ENCODE measurements at regions of chr2 and their contacts with region 1.

Region 1: GRCh38 chr2:240232961-240233893 is 92.8 kb upstream of the OTOS start:
- DNase-seq: peak; percentile 88
- ATAC-seq: peak; percentile 84
- H3K4me3 ChIP-seq: peak overlapping the region; percentile 35 to 49
- H3K27ac ChIP-seq: peak overlapping the region; percentile 65
- H3K4me1 ChIP-seq: peaks cover 4 to 40% of the 10 kb centered on the region in 2 experiments
- H3K27me3 ChIP-seq: no peaks in the 10 kb centered on the region
- CTCF ChIP-seq: peak; percentile 84 to 96 (median 85)
- POLR2A ChIP-seq: no peak
- RAD21 ChIP-seq: peak; percentile 100

Region 2: DNA sequence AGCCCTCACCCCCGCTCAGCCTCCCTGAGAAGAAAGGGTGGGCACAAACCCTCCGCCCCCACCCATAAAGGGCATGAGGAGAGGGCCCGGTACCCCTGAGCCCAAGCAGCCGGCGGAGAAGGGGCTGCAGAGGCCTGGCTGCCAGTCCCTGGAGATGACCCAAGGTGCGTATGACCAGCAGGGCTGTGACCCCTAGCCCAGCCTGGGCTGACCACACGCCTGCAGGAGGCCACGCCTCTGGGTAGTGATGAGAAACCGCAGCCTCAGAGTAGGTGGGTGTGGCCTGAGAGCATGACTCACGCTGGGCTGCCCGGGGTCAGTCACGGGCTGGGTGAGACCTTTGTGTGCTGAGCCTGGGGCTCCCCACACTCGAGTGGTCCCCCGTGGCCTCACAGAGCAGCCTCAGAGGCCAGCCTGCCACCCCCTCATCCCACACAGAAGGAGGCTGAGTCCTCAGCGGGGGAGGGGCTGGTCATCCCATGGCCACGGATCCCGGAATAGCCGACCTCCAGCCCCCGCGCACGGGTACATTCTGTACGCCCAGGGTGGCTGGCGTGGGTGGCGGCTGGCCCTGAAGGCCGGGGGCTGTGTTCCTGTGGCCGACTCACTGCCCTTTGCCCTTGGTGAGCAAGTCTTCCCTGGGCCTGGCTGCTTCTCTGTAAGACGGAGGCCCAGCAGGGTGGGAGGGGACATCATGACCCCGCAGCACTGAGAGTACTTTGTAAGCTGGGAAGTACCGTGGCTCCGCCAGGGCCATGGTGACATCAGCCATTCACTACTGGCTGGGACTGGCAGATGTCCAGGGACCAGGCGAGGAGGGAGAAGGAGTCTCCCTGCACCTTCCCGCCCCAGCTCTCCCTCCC is 18.0 kb after region 1 on chr2:
- CTCF ChIA-PET with region 1: interaction called, 4 read pairs
- POLR2A ChIA-PET with region 1: interaction called, 3 read pairs
- RAD21 ChIA-PET with region 1: no interaction called
- intact Hi-C with region 1: loop called (anchors 1 kb)
- DNase-seq: peak; percentile 77
- ATAC-seq: peak; percentile 82
- H3K4me3 ChIP-seq: peak overlapping the region; percentile 28 to 60
- H3K27ac ChIP-seq: peak overlapping the region; percentile 85
- H3K4me1 ChIP-seq: peaks cover 40 to 74% of the 10 kb centered on the region in 2 experiments
- H3K27me3 ChIP-seq: no peaks in the 10 kb centered on the region
- CTCF ChIP-seq: no peak
- POLR2A ChIP-seq: no peak
- RAD21 ChIP-seq: no peak

Region 3: GRCh38 chr2:240301256-240301795 is 68.1 kb after region 1 on chr2:
- CTCF ChIA-PET with region 1: no interaction called
- POLR2A ChIA-PET with region 1: no interaction called
- RAD21 ChIA-PET with region 1: interaction called in 1 of 2 experiments, 11 read pairs
- intact Hi-C with region 1: no loop called
- DNase-seq: no peak
- ATAC-seq: no peak
- H3K4me3 ChIP-seq: no peak overlapping the region
- H3K27ac ChIP-seq: no peak overlapping the region
- H3K4me1 ChIP-seq: peaks cover 0 to 3% of the 10 kb centered on the region in 2 experiments; a peak in 2 of 4 replicates
- H3K27me3 ChIP-seq: no peaks in the 10 kb centered on the region
- CTCF ChIP-seq: no peak
- POLR2A ChIP-seq: no peak
- RAD21 ChIP-seq: no peak

Region 4: DNA sequence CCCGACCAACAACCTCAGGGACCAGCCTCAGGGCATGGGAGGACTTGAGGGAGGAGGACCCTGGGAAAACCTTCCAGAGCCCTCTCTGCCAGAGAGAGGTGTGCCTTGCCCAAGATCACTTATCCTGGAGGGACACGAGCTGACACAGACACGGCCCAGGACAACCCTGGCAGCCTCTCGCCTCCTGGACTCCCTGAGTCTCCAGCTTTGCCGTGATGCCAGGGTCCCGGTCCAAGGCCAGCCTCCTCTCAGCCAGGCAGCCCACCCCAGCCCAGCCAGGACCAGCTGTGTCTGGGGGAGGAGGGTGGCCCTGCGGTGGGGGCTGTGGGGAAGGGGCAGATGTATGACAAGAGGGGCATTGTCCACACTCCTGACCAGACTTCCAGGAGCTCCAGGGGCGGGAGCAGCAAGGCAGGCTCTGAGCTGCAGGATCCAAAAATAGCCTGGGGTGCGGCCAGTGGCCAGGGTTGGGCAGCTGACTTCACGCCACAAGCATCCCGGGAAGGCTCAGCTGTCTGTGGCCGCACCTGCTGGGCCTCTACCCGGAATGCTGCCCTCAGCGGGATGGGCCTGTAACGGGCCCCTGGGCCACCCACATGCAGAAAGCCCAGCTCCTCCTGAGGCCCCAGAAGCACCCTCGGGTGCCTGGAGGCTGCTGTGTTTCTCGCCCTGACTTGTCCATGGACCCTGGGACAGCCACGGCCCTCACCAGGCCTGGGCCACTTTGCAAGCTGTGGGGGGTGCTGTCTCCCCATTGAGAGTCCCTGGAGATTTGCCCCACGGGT is 136.8 kb after region 1 on chr2:
- CTCF ChIA-PET with region 1: no interaction called
- POLR2A ChIA-PET with region 1: interaction called, 4 read pairs
- RAD21 ChIA-PET with region 1: interaction called in 1 of 2 experiments, 4 read pairs
- intact Hi-C with region 1: loop called (anchors 5 kb)
- DNase-seq: peak; percentile 64
- ATAC-seq: peak; percentile 82
- H3K4me3 ChIP-seq: peak overlapping the region; percentile 9 to 51
- H3K27ac ChIP-seq: peak overlapping the region; percentile 63
- H3K4me1 ChIP-seq: peaks cover 56 to 68% of the 10 kb centered on the region in 2 experiments
- H3K27me3 ChIP-seq: no peaks in the 10 kb centered on the region
- CTCF ChIP-seq: no peak
- POLR2A ChIP-seq: no peak
- RAD21 ChIP-seq: no peak; the same call in 1 of the 2 replicates

Region 5: GRCh38 chr2:240434728-240435456 is 201.7 kb after region 1 on chr2:
- CTCF ChIA-PET with region 1: interaction called, 9 read pairs
- POLR2A ChIA-PET with region 1: interaction called, 9 read pairs
- RAD21 ChIA-PET with region 1: interaction called, 3 to 4 read pairs
- intact Hi-C with region 1: loop called (anchors 1 kb)
- DNase-seq: peak; percentile 69
- ATAC-seq: peak; percentile 60
- H3K4me3 ChIP-seq: peak overlapping the region; percentile 74 to 96
- H3K27ac ChIP-seq: peak overlapping the region; percentile 81
- H3K4me1 ChIP-seq: peaks cover 29 to 57% of the 10 kb centered on the region in 2 experiments
- H3K27me3 ChIP-seq: no peaks in the 10 kb centered on the region
- CTCF ChIP-seq: no peak
- POLR2A ChIP-seq: no peak
- RAD21 ChIP-seq: no peak

Region 6: GRCh38 chr2:240499309-240500301 is 266.4 kb after region 1 on chr2:
- CTCF ChIA-PET with region 1: interaction called, 10 read pairs
- POLR2A ChIA-PET with region 1: no interaction called
- RAD21 ChIA-PET with region 1: no interaction called
- intact Hi-C with region 1: no loop called
- DNase-seq: no peak
- ATAC-seq: no peak
- H3K4me3 ChIP-seq: no peak overlapping the region
- H3K27ac ChIP-seq: no peak overlapping the region
- H3K4me1 ChIP-seq: no peaks in the 10 kb centered on the region
- H3K27me3 ChIP-seq: no peaks in the 10 kb centered on the region
- CTCF ChIP-seq: no peak
- POLR2A ChIP-seq: no peak
- RAD21 ChIP-seq: no peak

Region 7: GRCh38 chr2:240560480-240561326 is 327.5 kb after region 1 on chr2:
- CTCF ChIA-PET with region 1: interaction called, 6 read pairs
- POLR2A ChIA-PET with region 1: no interaction called
- RAD21 ChIA-PET with region 1: no interaction called
- intact Hi-C with region 1: loop called (anchors 10 kb)
- DNase-seq: peak; percentile 95
- ATAC-seq: peak; percentile 73
- H3K4me3 ChIP-seq: peak overlapping the region; percentile 67 to 69
- H3K27ac ChIP-seq: peak overlapping the region; percentile 98
- H3K4me1 ChIP-seq: peaks cover 33 to 53% of the 10 kb centered on the region in 2 experiments
- H3K27me3 ChIP-seq: no peaks in the 10 kb centered on the region
- CTCF ChIP-seq: 0 out of 6 replicates have a peak, but pooled peaks of 1 of the 3 experiments have one; percentile 19
- POLR2A ChIP-seq: peak; percentile 63
- RAD21 ChIP-seq: no peak